Colonic mucosa (tissue), 4 donors: ENCODE measurements at regions of chr17 and their contacts with region 1.

Region 1: DNA sequence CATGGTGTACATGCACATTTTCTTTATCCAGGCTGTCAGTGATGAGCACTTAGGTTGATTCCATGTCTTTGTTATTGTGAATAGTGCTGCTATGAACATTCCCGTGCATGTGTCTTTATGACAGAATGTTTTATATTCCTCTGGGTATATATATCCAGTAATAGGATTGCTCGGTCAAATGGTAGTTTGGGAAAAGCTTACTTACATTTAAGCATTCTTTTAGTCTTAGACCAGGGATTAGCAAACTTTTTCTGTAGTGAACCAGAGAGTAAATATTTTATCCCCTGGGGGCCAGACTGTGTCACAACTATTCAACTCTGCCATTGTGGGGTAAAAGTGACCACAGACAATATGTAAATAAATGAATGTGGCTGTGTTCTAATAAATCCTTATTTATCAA is 40.2 kb downstream of the MED13 start:
- DNase-seq: no peak
- H3K4me3 ChIP-seq: no peak overlapping the region
- H3K27ac ChIP-seq: no peak overlapping the region
- H3K4me1 ChIP-seq: no peaks in the 10 kb centered on the region
- H3K27me3 ChIP-seq: no peaks in the 10 kb centered on the region
- CTCF ChIP-seq: no peak

Region 2: DNA sequence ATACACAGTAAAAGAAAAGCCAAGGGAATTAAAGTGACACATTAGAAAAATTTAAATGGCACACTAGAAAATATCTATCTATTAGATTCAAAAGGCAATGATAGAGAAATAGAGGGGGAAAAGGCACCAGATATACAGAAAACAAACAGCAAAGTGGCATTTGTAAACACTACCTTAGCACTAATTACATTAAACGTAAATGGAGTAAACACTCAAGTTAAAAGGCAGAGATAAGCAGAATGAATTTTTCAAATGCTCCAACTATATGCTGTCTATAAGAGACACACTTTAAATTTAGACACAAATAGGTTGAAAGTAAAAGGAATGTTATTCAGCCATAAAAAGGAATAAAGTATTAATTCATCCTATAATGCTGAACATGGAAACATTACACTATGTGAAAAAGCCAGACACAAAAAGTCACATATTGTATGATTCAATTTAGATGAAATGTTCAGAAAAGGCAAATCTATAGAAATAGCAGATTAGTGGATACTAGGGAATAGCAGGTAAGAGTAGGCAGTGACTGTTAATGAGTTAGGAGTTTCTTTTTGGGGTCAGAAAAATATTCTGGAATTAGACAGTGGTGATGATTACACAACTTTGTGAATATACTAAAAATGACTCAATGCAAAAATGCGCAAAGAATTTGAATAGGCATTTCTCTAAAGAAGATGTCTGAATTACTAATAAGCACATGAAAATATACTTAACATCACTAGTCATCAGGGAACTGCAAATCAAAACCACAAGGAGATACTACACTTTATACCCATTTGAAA is 254.0 kb before region 1 on chr17:
- intact Hi-C with region 1: no loop called
- DNase-seq: no peak
- H3K4me3 ChIP-seq: no peak overlapping the region
- H3K27ac ChIP-seq: no peak overlapping the region
- H3K4me1 ChIP-seq: no peaks in the 10 kb centered on the region
- H3K27me3 ChIP-seq: no peaks in the 10 kb centered on the region
- CTCF ChIP-seq: no peak

Region 3: DNA sequence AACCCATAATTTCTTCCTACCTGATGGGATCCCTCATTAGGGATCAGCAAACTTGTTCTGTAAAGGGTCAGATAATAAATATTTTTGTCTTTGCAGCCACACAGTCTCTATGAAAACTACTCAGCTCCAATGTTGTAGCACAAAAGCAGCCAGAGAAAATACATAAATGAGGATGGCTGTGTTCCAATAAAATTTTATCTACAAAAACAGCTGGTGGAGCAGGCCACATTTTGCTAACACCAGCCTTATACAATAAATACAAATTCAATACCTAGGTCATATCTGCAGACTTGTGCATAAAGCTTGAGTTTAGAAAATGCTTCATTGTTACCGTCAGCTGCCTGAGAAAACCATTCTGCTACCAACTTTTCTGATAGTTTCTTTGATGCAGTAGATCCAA is 58.7 kb before region 1 on chr17:
- intact Hi-C with region 1: loop called (anchors 10 kb)
- DNase-seq: no peak
- H3K4me3 ChIP-seq: no peak overlapping the region
- H3K27ac ChIP-seq: no peak overlapping the region
- H3K4me1 ChIP-seq: no peaks in the 10 kb centered on the region
- H3K27me3 ChIP-seq: no peaks in the 10 kb centered on the region
- CTCF ChIP-seq: no peak

Region 4: DNA sequence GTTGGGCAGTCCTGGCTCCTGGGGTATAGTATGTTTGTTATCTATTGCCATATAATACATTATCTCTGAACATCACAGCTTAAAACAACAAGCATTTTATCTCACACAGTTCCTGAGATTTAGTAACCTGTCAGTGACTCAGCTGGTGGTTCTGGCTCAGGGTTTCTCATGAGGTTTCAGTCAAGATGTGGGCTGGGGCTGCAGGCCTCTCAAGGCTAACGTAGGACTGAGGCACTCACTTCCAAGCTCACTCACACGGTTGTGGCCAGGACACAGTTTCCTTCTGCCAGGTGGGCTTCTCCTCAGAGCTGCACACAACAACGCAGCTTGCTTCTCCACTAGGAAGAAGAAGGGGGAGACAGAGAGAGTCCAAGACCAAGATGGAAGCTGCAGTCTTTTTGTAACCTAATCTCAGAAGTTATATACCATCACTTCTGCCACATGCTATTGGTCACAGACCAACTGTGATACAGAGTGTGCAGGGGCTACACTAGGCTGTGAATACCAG is 50.5 kb after region 1 on chr17:
- intact Hi-C with region 1: no loop called
- DNase-seq: no peak
- H3K4me3 ChIP-seq: no peak overlapping the region
- H3K27ac ChIP-seq: no peak overlapping the region
- H3K4me1 ChIP-seq: no peaks in the 10 kb centered on the region
- H3K27me3 ChIP-seq: no peaks in the 10 kb centered on the region
- CTCF ChIP-seq: no peak